Activated CD8-positive, alpha-beta memory T cell treated with anti-CD3 and anti-CD28 coated beads, Interleukin-2, amount 10 ng/mL, durations not matched to agents 7 days and 5 days (primary cell): ENCODE measurements at regions of chr14 and their contacts with region 1.

Region 1: GRCh38 chr14:21014761-21015190 is 10.1 kb downstream of the NDRG2 start:
- DNase-seq: peak; percentile 83
- ATAC-seq: peak; percentile 78
- H3K4me3 Mint-ChIP-seq: no peak overlapping the region
- H3K27ac Mint-ChIP-seq: no peak overlapping the region
- H3K4me1 Mint-ChIP-seq: no peaks in the 10 kb centered on the region
- H3K27me3 Mint-ChIP-seq: peaks cover 23% of the 10 kb centered on the region

Region 2: GRCh38 chr14:20998664-20999366 is 16.0 kb before region 1 on chr14 and contains the start of gene SLC39A2:
- CTCF ChIA-PET with region 1: interaction called, 29 read pairs
- DNase-seq: no peak
- ATAC-seq: no peak
- H3K4me3 Mint-ChIP-seq: no peak within 1 kb of the TSS
- H3K27ac Mint-ChIP-seq: no peak within 1 kb of the TSS
- H3K4me1 Mint-ChIP-seq: peaks cover 10% of the 10 kb centered on the region
- H3K27me3 Mint-ChIP-seq: no peaks in the 10 kb centered on the region
- total RNA-seq, gene SLC39A2: 0.16 to 0.44 TPM

Region 3: GRCh38 chr14:21024585-21025370 is 10.0 kb after region 1 on chr14 and contains the start of gene NDRG2:
- CTCF ChIA-PET with region 1: interaction called, 26 read pairs
- DNase-seq: peak; percentile 74
- ATAC-seq: peak; percentile 90
- H3K4me3 Mint-ChIP-seq: peak within 1 kb of the TSS; percentile 68
- H3K27ac Mint-ChIP-seq: no peak within 1 kb of the TSS
- H3K4me1 Mint-ChIP-seq: peaks cover 9% of the 10 kb centered on the region
- H3K27me3 Mint-ChIP-seq: peaks cover 39% of the 10 kb centered on the region
- total RNA-seq, gene NDRG2: 2.1 to 6.9 TPM

Region 4: DNA sequence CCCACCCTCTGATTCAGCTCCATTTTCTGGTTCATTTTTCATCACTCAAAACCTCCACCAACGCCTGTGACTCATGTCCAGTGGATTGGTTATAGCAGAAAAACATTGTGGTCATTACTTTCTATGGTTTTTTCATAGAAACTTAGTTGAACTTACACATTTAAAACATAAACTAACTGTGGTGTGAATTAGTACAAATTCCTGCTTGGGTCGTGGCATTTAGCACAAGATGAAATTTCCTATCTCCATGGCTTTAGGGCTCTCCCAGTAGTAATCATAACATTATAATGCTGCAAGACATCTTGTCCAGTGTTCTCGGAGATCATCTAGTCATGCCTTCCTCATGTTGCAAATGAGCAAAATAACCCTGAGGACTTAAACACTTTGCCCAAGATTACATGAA is 34.5 kb after region 1 on chr14:
- CTCF ChIA-PET with region 1: interaction called, 21 read pairs
- DNase-seq: no peak
- ATAC-seq: no peak
- H3K4me3 Mint-ChIP-seq: no peak overlapping the region
- H3K27ac Mint-ChIP-seq: no peak overlapping the region
- H3K4me1 Mint-ChIP-seq: peaks cover 7% of the 10 kb centered on the region
- H3K27me3 Mint-ChIP-seq: peaks cover 29% of the 10 kb centered on the region

Region 5: GRCh38 chr14:21092273-21093011 is 77.7 kb after region 1 on chr14:
- CTCF ChIA-PET with region 1: interaction called, 170 read pairs
- DNase-seq: peak; percentile 91
- ATAC-seq: peak; percentile 85
- H3K4me3 Mint-ChIP-seq: no peak overlapping the region
- H3K27ac Mint-ChIP-seq: no peak overlapping the region
- H3K4me1 Mint-ChIP-seq: peaks cover 20% of the 10 kb centered on the region
- H3K27me3 Mint-ChIP-seq: peaks cover 7% of the 10 kb centered on the region

Region 6: GRCh38 chr14:21109377-21110260 is 94.8 kb after region 1 on chr14:
- CTCF ChIA-PET with region 1: interaction called, 147 read pairs
- DNase-seq: peak; percentile 57
- ATAC-seq: peak; percentile 71
- H3K4me3 Mint-ChIP-seq: no peak overlapping the region
- H3K27ac Mint-ChIP-seq: no peak overlapping the region
- H3K4me1 Mint-ChIP-seq: peaks cover 32% of the 10 kb centered on the region
- H3K27me3 Mint-ChIP-seq: no peaks in the 10 kb centered on the region